ENCODE measurements at regions of chr20 and their contacts with region 1.

Region 1: DNA sequence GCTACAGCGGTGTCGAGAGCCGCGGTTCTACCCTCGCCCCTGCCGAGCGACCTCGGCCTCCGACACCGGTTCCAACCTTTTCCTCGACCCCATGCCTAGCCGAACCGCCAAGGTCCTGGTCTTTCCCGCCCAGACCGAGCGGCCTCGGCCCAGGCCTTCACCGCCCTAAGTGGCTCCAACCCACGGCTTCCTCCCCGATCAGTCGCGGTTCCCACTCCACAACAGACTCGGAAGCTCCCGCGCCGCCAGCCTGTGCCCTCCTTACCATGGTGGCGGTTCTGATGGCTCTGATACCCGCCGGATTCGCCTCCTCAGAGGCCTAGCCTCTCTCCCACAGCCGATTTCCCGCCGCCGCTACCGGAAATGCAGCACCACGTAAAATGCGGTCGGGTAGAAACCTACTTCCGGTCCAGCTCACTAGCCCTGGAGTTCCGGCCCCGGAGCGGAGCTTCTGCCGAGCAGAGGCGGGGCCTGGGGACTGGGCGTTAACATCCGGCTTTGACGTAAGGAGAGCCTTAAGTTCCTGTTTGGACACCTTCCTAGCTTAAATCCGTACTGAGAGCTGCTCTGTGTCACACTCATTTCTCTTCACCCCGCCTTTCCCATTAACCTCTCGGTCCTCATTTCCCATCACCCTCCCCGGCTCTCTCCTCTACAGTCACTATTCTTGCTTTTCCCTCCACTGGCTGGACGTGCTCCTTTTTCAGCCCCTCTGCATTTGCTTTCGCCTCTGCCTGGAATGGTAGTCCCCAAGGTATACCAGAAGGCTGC is at the start of gene SNRPB:
- DNase-seq: peak; percentile 98
- ATAC-seq: peak; percentile 99
- H3K4me3 Mint-ChIP-seq: peak within 1 kb of the TSS; percentile 96
- H3K27ac Mint-ChIP-seq: peak within 1 kb of the TSS; percentile 100
- H3K4me1 Mint-ChIP-seq: peaks cover 49% of the 10 kb centered on the region
- H3K27me3 Mint-ChIP-seq: no peaks in the 10 kb centered on the region
- total RNA-seq, gene SNRPB: 348 to 466 TPM

Region 2: GRCh38 chr20:2508631-2509467 is 38.2 kb after region 1 on chr20 and contains the start of gene ZNF343:
- CTCF ChIA-PET with region 1: interaction called, 3 read pairs
- POLR2A ChIA-PET with region 1: interaction called, 12 read pairs
- intact Hi-C with region 1: loop called (anchors 1 kb)
- DNase-seq: peak; percentile 88
- ATAC-seq: peak; percentile 95
- H3K4me3 Mint-ChIP-seq: peak within 1 kb of the TSS; percentile 85
- H3K27ac Mint-ChIP-seq: peak within 1 kb of the TSS; percentile 95
- H3K4me1 Mint-ChIP-seq: peaks cover 8% of the 10 kb centered on the region
- H3K27me3 Mint-ChIP-seq: peaks cover 5% of the 10 kb centered on the region
- total RNA-seq, gene ZNF343: 9.9 to 12.3 TPM

Region 3: GRCh38 chr20:2533118-2533517 is 62.5 kb after region 1 on chr20:
- CTCF ChIA-PET with region 1: no interaction called
- POLR2A ChIA-PET with region 1: interaction called, 12 read pairs
- intact Hi-C with region 1: no loop called
- DNase-seq: no peak
- ATAC-seq: no peak
- H3K4me3 Mint-ChIP-seq: no peak overlapping the region
- H3K27ac Mint-ChIP-seq: no peak overlapping the region
- H3K4me1 Mint-ChIP-seq: peaks cover 6% of the 10 kb centered on the region
- H3K27me3 Mint-ChIP-seq: peaks cover 6% of the 10 kb centered on the region

Measured in activated CD4-positive, alpha-beta T cell treated with anti-CD3 and anti-CD28 coated beads for 36 hours (primary cell).